Colonic mucosa (tissue), 4 donors: ENCODE measurements at regions of chr3 and their contacts with region 1.

Region 1: DNA sequence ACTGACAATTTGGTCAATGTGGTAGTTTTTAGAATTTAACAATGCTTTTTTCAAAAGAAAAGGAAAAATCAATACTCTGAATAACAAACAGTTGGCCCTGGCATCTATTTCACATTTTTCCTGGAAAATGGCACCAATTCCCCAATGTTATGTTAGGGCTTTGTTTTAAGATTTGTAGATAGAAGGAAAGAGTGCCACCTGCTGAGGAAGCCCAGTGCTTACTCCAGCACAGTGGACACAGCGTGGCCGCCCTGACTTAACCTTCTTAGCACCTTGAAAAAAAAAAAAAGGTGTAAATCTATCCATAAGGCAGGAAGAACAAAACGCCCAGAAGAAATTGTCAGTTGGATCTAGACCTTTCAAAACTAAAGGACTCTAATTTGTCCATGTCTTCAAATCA is 110.7 kb upstream of the CNTN4 start:
- DNase-seq: peak; percentile 22
- H3K4me3 ChIP-seq: no peak overlapping the region
- H3K27ac ChIP-seq: no peak overlapping the region
- H3K4me1 ChIP-seq: no peaks in the 10 kb centered on the region
- H3K27me3 ChIP-seq: no peaks in the 10 kb centered on the region
- CTCF ChIP-seq: peak; percentile 17

Region 2: GRCh38 chr3:1082108-1082507 is 905.9 kb before region 1 on chr3:
- intact Hi-C with region 1: loop called (anchors 5 kb)
- DNase-seq: peak; percentile 40
- H3K4me3 ChIP-seq: no peak overlapping the region
- H3K27ac ChIP-seq: no peak overlapping the region
- H3K4me1 ChIP-seq: no peaks in the 10 kb centered on the region
- H3K27me3 ChIP-seq: no peaks in the 10 kb centered on the region
- CTCF ChIP-seq: peak; percentile 30